Right ventricle myocardium inferior (tissue), 1 donor: ENCODE measurements at regions of chr19 and their contacts with region 1.

Region 1: GRCh38 chr19:38229585-38230073 is 5.6 kb upstream of the DPF1 start:
- DNase-seq: peak; percentile 75
- ATAC-seq: peak; percentile 84

Region 2: GRCh38 chr19:38142176-38143035 is 87.2 kb before region 1 on chr19:
- intact Hi-C with region 1: loop called (anchors 5 kb)
- DNase-seq: no peak
- ATAC-seq: peak; percentile 50

Region 3: DNA sequence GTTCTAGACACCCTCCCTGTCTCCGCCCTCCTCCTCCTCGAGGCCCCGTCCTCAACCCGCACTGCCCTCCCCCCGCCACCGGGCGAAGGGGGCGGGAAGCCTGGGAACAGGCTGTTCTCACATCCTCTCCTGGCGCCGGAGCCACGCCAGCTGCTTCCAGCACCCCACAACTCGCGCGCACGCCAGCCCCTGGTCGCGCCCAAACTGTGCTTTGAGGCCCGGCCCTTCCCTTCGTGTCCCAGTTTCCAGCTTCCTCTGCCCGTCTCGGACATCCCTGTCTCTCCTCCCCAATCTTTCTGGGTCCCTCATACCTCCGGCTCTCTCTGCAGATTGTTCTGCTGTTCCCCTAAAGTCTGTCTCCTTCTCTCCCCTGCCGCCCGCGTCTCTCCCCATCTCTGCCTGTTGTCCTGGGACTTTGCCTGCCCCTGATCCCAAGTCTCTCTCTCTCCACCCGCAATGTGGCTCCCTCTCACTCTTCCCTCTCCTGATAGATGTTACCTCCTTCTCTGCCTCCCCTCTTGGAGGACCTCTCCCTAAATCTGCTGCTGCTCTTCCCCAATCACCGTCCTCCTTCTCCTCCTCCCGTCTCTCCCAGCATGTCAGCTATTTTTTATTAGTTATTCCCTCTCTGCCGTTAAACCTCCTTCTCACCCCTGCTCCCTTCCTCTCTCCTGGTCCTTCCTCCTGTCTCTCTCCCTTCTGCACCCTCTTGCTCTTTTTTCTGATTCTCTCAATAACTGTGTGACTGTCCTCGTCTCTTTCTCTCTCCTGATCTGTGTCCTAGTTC is 19.8 kb before region 1 on chr19:
- intact Hi-C with region 1: no loop called
- DNase-seq: peak; percentile 90
- ATAC-seq: peak; percentile 84

Region 4: DNA sequence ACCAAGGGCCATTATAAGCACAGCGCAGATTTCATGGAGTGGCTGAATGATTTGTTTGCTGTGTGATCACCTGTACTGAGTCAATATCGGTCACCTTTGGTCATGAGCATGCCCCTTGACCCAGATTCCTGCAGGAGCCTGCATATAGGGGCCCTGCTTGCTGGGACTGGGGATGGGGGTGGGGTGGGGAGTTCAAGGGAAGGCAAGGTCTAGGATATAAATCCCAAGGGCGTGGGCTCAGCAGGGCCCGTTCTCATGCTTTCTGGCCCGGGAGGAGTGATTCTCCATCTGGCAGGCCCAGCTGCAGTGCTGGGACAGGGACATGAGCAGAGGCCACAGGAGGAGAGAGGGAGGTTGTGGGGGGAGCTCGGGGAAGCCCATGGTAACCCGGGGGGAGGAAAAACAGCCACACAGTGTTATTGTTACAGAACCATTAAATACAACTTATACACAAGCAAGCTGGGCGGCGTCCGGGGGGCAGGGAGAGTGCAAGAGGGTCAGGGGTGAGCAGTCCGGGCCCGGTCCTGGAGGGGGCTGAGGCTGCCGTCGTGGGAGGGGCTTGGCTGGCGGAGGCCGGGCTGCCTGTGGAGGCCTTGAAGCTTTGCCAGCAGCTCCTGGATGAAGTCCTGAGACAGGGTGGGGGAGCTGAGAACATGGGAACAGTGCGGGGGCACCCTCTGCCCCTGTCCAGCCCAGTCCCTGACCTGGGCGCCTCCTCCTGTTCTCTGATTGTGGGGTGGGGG is 21.4 kb after region 1 on chr19:
- intact Hi-C with region 1: no loop called
- DNase-seq: peak; percentile 89
- ATAC-seq: peak; percentile 64